CD8-positive, alpha-beta T cell (primary cell): ENCODE measurements at regions of chr12 and their contacts with region 1.

Region 1: DNA sequence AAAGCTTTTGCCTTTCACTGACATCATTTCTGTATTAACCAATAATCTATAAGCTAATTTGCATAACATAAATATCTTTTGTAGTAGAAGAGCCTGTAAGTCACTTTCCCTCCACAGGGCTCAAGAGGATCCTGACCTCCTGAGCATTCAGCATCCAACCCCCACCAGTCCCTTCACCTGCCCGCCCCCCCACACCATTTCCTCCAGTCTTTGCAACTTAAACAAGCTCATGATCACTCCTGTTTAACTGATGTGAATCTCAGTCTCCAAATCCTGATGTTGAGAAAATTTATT is 12.0 kb upstream of the CRY1 start:
- DNase-seq: no peak
- ATAC-seq: peak; percentile 38
- H3K4me3 ChIP-seq: no peak overlapping the region
- H3K4me3 Mint-ChIP-seq: no peak overlapping the region
- H3K27ac ChIP-seq: no peak overlapping the region
- H3K27ac Mint-ChIP-seq: no peak overlapping the region
- H3K4me1 ChIP-seq: no peaks in the 10 kb centered on the region
- H3K4me1 Mint-ChIP-seq: peaks cover 3% of the 10 kb centered on the region
- H3K27me3 ChIP-seq: no peaks in the 10 kb centered on the region
- H3K27me3 Mint-ChIP-seq: peaks cover 4% of the 10 kb centered on the region
- CTCF ChIP-seq: no peak

Region 2: GRCh38 chr12:107014028-107014427 is 91.3 kb before region 1 on chr12:
- CTCF ChIA-PET with region 1: interaction called, 15 read pairs
- POLR2A ChIA-PET with region 1: no interaction called
- intact Hi-C with region 1: loop called (anchors 1 to 2 kb)
- DNase-seq: peak in 3 of 9 experiments; percentile 24 to 57 (median 50)
- ATAC-seq: peak; percentile 72
- H3K4me3 ChIP-seq: no peak overlapping the region
- H3K4me3 Mint-ChIP-seq: no peak overlapping the region
- H3K27ac ChIP-seq: no peak overlapping the region
- H3K27ac Mint-ChIP-seq: no peak overlapping the region
- H3K4me1 ChIP-seq: no peaks in the 10 kb centered on the region
- H3K4me1 Mint-ChIP-seq: peaks cover 2% of the 10 kb centered on the region
- H3K27me3 ChIP-seq: no peaks in the 10 kb centered on the region
- H3K27me3 Mint-ChIP-seq: no peaks in the 10 kb centered on the region
- CTCF ChIP-seq: peak; percentile 27

Region 3: GRCh38 chr12:107079172-107080011 is 26.0 kb before region 1 on chr12:
- CTCF ChIA-PET with region 1: interaction called, 6 read pairs
- POLR2A ChIA-PET with region 1: no interaction called
- intact Hi-C with region 1: loop called in 1 of 2 experiments (anchors 1 kb)
- DNase-seq: peak in 2 of 9 experiments; percentile 37 to 53
- ATAC-seq: peak; percentile 64
- H3K4me3 ChIP-seq: no peak overlapping the region
- H3K4me3 Mint-ChIP-seq: no peak overlapping the region
- H3K27ac ChIP-seq: no peak overlapping the region
- H3K27ac Mint-ChIP-seq: no peak overlapping the region
- H3K4me1 ChIP-seq: no peaks in the 10 kb centered on the region
- H3K4me1 Mint-ChIP-seq: peaks cover 27% of the 10 kb centered on the region
- H3K27me3 ChIP-seq: no peaks in the 10 kb centered on the region
- H3K27me3 Mint-ChIP-seq: no peaks in the 10 kb centered on the region
- CTCF ChIP-seq: peak; percentile 63

Region 4: GRCh38 chr12:107492393-107493134 is 387.2 kb after region 1 on chr12:
- CTCF ChIA-PET with region 1: no interaction called
- POLR2A ChIA-PET with region 1: no interaction called
- intact Hi-C with region 1: no loop called
- DNase-seq: no peak
- ATAC-seq: no peak
- H3K4me3 ChIP-seq: no peak overlapping the region
- H3K4me3 Mint-ChIP-seq: peak overlapping the region; percentile 71
- H3K27ac ChIP-seq: peak overlapping the region in 1 of 2 experiments; percentile 9
- H3K27ac Mint-ChIP-seq: peak overlapping the region; percentile 92
- H3K4me1 ChIP-seq: peaks cover 28% of the 10 kb centered on the region
- H3K4me1 Mint-ChIP-seq: peaks cover 42% of the 10 kb centered on the region
- H3K27me3 ChIP-seq: no peaks in the 10 kb centered on the region
- H3K27me3 Mint-ChIP-seq: no peaks in the 10 kb centered on the region
- CTCF ChIP-seq: no peak

Region 5: DNA sequence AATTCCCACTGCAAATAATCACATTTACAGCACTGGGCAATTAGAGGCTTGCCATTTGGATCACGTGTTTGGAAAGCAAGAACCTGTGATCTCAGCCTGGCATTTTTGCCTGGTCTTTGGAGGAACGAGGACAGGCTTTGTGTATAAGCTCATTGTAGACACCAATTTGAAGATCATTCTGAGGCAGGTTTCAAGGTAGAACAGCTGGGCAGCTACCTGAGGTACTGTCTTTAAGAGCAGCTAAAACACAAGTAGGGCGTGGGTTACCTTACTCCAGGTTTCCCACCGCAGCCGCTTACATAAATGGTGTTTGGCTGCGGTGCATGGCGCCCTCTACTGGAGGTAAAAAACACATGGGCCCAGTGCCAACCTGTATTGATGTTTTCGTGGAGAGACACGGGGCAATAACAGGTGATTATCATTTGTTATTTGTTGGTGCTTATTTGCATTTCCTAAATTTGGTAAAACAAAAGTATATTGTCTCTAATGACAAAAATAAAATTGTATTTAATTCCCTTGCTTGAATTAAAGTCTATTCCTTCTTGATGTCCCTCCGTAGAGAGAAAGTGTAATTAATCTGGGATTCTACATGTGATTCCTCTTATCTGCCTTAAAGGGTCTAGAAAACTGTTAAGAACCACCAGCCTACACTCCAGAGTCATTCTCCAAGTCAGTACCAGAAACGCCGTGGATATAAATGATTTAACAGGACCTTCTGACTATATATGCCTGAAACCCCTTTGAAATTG is 1845.8 kb after region 1 on chr12:
- CTCF ChIA-PET with region 1: no interaction called
- POLR2A ChIA-PET with region 1: no interaction called
- intact Hi-C with region 1: no loop called
- DNase-seq: peak; percentile 43 to 83 (median 69)
- ATAC-seq: peak; percentile 91
- H3K4me3 ChIP-seq: no peak overlapping the region
- H3K4me3 Mint-ChIP-seq: no peak overlapping the region
- H3K27ac ChIP-seq: no peak overlapping the region
- H3K27ac Mint-ChIP-seq: no peak overlapping the region
- H3K4me1 ChIP-seq: no peaks in the 10 kb centered on the region
- H3K4me1 Mint-ChIP-seq: peaks cover 6% of the 10 kb centered on the region
- H3K27me3 ChIP-seq: no peaks in the 10 kb centered on the region
- H3K27me3 Mint-ChIP-seq: peaks cover 16% of the 10 kb centered on the region
- CTCF ChIP-seq: peak; percentile 86